Activated naive CD4-positive, alpha-beta T cell treated with anti-CD3 and anti-CD28 coated beads, Interleukin-2, amount 10 ng/mL, durations not matched to agents 7 days and 5 days (primary cell): ENCODE measurements at regions of chr7 and their contacts with region 1.

Region 1: GRCh38 chr7:71733107-71733870 is 601.3 kb downstream of the GALNT17 start:
- DNase-seq: peak; percentile 66
- H3K4me3 Mint-ChIP-seq: no peak overlapping the region
- H3K27ac Mint-ChIP-seq: no peak overlapping the region
- H3K4me1 Mint-ChIP-seq: no peaks in the 10 kb centered on the region
- H3K27me3 Mint-ChIP-seq: no peaks in the 10 kb centered on the region

Region 2: DNA sequence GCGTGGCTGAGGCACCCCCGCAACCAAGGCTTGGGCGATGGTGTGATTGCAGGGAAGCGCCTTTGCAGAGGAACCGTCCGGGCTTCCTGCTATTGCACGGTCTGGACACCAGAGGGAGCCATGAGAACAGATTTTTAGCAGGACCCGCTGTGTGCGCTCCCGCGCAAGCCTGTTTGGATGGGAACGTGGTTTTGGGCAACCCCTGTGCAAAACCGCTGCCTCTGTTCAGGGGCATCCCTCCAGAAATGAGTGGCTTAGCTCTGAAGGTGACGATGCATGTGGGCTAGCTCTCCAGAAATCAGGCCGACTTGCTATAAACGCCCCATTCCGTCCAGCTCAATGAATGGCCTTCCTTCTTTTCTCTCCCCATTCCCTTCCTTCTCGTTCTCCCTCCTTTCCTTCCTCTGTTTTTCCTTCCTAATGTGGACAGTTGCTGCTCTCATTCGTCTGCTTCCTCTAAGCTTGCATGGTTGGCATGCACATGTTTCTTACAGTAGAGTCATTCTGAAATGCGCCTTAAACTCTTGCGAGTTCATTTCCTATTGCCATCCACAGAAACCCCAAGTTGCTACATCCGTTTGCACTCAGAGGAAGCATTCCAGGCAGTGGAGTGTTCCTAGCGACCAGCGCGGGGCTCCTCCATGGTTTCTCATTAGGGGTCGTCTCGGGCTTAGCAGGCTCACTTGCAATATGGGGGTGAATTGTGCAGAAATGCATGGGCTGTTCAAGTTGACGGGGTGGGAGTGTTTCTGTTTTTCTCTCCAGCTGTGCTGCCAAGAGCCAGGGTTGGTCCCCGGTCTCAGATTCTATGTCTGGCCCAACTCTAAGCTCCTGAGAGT is 903.8 kb before region 1 on chr7:
- CTCF ChIA-PET with region 1: interaction called, 11 read pairs
- DNase-seq: peak; percentile 70
- H3K4me3 Mint-ChIP-seq: no peak overlapping the region
- H3K27ac Mint-ChIP-seq: no peak overlapping the region
- H3K4me1 Mint-ChIP-seq: peaks cover 3% of the 10 kb centered on the region
- H3K27me3 Mint-ChIP-seq: peaks cover 5% of the 10 kb centered on the region

Region 3: GRCh38 chr7:70856866-70857630 is 876.2 kb before region 1 on chr7:
- CTCF ChIA-PET with region 1: interaction called, 48 read pairs
- DNase-seq: peak; percentile 61
- H3K4me3 Mint-ChIP-seq: no peak overlapping the region
- H3K27ac Mint-ChIP-seq: no peak overlapping the region
- H3K4me1 Mint-ChIP-seq: no peaks in the 10 kb centered on the region
- H3K27me3 Mint-ChIP-seq: no peaks in the 10 kb centered on the region

Region 4: DNA sequence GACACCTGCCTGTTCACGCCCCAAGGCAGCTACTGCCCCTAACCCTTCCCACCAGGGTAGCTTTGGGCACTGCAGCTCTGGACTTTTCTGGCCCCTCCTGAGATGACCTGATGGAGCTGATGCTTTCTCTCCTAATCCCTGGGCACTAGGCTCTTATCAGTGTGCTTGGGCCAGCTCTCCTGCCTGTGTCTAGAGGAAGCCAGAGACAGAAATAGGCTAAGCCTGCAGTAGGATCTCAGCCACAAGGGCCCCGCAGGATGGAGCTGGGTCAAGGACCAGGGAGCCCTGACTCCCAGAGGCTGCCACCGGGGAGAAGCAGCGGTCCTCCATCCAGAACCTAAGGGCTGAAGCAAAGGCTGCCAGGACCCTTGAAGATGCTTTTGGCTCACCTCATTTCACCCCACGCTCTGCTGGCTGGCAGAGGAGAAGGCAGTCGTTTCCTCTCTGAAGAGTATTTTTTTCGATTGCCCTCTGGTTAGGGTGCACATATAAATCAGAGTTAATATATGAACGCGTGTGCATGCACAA is 20.6 kb before region 1 on chr7:
- CTCF ChIA-PET with region 1: no interaction called
- DNase-seq: no peak
- H3K4me3 Mint-ChIP-seq: no peak overlapping the region
- H3K27ac Mint-ChIP-seq: no peak overlapping the region
- H3K4me1 Mint-ChIP-seq: no peaks in the 10 kb centered on the region
- H3K27me3 Mint-ChIP-seq: no peaks in the 10 kb centered on the region